ENCODE measurements at regions of chr4 and their contacts with region 1.

Region 1: DNA sequence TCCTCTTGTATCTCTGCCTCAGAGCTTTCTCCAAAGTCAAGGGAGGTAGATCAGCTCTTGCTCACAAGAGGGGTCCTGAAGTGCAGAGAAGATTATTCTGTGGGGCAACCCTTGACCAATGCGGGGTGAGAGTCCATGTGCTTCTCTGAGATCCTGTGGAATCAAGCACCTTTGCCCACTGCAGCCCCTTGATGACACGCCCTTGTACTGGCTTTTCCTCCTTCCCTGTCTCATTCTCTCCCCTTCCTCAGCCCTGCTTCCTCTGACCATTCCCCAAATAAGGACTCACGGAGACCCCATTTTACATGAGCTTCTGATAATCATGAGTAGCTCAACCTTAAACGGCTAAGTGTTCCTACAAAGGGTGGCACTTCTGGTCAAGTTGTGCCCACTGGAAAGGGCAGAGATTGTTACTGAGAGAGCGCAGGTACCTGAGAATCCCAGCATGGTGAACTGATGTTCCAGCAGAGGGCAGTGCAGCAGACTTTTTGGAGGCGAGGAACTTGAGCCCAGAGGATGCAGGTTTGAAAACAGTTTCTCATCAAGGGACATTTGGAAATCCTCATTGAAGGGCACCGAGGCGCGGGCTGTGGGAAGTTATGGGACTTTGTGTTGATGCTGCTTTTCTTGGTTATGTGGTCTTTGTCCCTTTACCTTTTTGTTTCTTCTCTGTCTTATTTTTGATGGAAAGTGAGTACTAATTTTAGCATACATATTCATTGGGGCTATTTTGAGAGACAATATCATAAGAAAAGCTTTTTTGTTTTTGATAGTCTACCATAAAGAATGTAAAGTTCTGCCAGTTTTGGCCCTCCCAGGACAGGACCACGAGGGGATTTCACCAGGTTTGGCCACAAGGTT is 201.3 kb downstream of the RBM46 start:
- DNase-seq: peak; percentile 53
- H3K4me3 Mint-ChIP-seq: no peak overlapping the region
- H3K27ac Mint-ChIP-seq: no peak overlapping the region
- H3K4me1 Mint-ChIP-seq: no peaks in the 10 kb centered on the region
- H3K27me3 Mint-ChIP-seq: no peaks in the 10 kb centered on the region

Region 2: GRCh38 chr4:155353923-155354540 is 371.6 kb after region 1 on chr4:
- CTCF ChIA-PET with region 1: no interaction called
- POLR2A ChIA-PET with region 1: no interaction called
- intact Hi-C with region 1: loop called (anchors 5 kb)
- DNase-seq: peak; percentile 50
- H3K4me3 Mint-ChIP-seq: no peak overlapping the region
- H3K27ac Mint-ChIP-seq: no peak overlapping the region
- H3K4me1 Mint-ChIP-seq: no peaks in the 10 kb centered on the region
- H3K27me3 Mint-ChIP-seq: no peaks in the 10 kb centered on the region

Region 3: DNA sequence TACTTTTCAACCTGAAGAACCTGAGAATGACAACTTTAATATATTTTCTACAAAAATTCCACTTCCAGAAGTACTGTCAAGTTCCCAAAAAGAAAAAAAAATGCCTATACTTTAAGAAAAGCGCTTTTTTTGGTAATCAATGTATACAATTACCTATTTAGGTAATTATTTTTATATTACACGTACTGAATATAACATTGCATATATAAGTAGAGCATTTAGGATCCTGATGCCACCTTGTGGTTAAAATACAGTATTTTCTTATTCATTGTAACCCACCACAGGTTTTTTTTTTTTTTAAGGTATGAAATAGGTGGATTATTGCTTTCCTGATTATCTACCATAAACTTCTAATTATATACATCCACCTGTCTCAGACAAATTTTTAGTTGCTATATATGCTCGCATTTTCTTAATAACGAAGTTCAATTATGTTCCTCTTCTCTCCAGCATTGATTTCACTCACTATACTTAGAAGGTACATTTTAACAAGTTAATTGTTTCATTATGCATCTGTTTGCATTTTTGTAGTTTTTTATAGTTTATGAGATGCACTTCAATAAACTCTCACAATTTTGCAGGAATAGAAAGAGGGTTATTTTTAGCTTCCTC is 389.1 kb after region 1 on chr4:
- CTCF ChIA-PET with region 1: no interaction called
- POLR2A ChIA-PET with region 1: no interaction called
- intact Hi-C with region 1: loop called (anchors 5 kb)
- DNase-seq: no peak
- H3K4me3 Mint-ChIP-seq: no peak overlapping the region
- H3K27ac Mint-ChIP-seq: no peak overlapping the region
- H3K4me1 Mint-ChIP-seq: peaks cover 10% of the 10 kb centered on the region
- H3K27me3 Mint-ChIP-seq: no peaks in the 10 kb centered on the region

Region 4: DNA sequence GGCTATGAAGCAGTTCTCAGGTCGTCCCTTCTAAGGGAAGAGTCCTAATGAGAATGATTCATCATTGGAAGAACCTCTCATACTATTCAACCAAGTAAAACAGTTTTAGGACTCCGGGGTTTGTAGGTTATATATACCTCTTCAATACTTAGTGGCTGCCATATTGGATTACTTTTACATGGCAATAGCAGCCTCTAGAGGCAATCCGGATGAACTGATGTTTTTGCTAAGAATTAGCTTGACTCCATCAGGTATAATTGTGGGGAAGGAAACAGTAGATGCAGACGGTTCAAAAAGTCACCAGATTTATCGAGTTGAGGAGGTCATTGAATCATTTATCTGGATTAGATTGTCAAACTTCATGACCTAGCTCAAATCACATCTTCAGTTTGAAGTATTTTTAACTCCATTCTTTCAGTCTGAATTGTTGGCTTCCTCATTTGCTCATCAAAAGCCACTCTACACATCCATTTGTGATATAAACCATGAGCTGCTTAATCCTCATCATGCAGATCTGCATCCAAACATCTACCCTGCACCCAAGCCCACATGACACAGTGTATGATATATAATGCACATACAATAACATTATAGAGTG is 804.8 kb after region 1 on chr4:
- CTCF ChIA-PET with region 1: no interaction called
- POLR2A ChIA-PET with region 1: no interaction called
- intact Hi-C with region 1: loop called (anchors 5 kb)
- DNase-seq: no peak
- H3K4me3 Mint-ChIP-seq: no peak overlapping the region
- H3K27ac Mint-ChIP-seq: no peak overlapping the region
- H3K4me1 Mint-ChIP-seq: peaks cover 4% of the 10 kb centered on the region
- H3K27me3 Mint-ChIP-seq: no peaks in the 10 kb centered on the region

Measured in activated CD4-positive, alpha-beta memory T cell treated with anti-CD3 and anti-CD28 coated beads for 36 hours (primary cell).